Calu3 (cell line): ENCODE measurements at regions of chr3 and their contacts with region 1.

Region 1: GRCh38 chr3:139427283-139427993 is 38.0 kb upstream of the COPB2 start:
- DNase-seq: peak; percentile 73
- H3K4me3 Mint-ChIP-seq: no peak overlapping the region
- H3K27ac Mint-ChIP-seq: no peak overlapping the region
- H3K4me1 Mint-ChIP-seq: no peaks in the 10 kb centered on the region
- H3K27me3 Mint-ChIP-seq: no peaks in the 10 kb centered on the region
- CTCF ChIP-seq: peak; percentile 83

Region 2: DNA sequence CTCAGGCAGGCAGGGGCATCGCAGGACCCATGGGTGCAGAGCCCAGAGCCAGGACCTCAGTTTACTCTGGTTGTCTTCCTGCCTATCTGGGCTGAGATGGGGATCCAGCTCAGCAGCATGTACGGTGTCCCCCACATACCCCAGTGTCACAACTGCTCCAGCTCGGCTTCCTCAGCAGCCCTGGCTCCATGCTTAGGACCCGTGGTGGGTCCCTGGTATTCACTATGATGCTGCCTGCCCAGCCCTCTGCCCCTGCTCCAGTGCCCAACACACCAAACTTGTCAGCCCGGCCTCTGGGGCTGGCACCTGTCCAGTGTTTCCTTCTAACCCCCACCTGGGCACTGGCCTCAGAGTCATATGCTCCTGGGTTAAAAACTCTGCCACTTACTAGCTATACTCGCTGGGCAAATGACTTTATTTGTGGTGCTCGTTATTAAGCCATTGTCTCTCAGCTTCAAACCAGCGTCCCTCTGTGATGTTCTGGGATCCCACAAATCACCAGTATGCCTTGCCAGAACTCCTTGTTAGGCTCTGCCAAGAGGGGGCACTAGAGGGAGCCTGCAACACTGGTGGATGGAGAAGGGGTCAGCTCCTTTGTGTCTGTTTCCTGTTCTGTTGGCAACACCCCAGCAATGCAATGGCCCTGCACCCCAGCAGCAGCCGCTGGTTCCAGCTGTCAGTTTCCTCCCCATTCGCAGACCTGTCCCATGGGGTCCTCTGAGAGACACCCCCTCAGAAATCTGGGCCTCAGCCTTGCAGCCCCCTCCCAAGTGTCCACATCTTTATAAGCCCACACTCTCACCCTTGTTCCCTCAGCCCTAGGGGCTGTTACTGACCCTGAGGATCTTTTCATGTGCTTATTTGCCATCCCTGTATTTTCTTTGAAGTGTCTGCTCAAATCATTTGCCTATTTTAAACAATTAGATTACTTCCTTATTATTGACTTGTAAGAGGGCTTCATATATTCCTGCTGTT is 107.7 kb before region 1 on chr3:
- CTCF ChIA-PET with region 1: no interaction called
- intact Hi-C with region 1: no loop called
- DNase-seq: peak; percentile 65
- H3K4me3 Mint-ChIP-seq: no peak overlapping the region
- H3K27ac Mint-ChIP-seq: no peak overlapping the region
- H3K4me1 Mint-ChIP-seq: peaks cover 39% of the 10 kb centered on the region
- H3K27me3 Mint-ChIP-seq: no peaks in the 10 kb centered on the region
- CTCF ChIP-seq: no peak

Region 3: GRCh38 chr3:139506766-139507165 is 79.3 kb after region 1 on chr3:
- CTCF ChIA-PET with region 1: interaction called, 3 read pairs
- intact Hi-C with region 1: loop called (anchors 5 kb)
- DNase-seq: peak; percentile 31
- H3K4me3 Mint-ChIP-seq: no peak overlapping the region
- H3K27ac Mint-ChIP-seq: no peak overlapping the region
- H3K4me1 Mint-ChIP-seq: peaks cover 32% of the 10 kb centered on the region
- H3K27me3 Mint-ChIP-seq: no peaks in the 10 kb centered on the region
- CTCF ChIP-seq: peak; percentile 32

Region 4: DNA sequence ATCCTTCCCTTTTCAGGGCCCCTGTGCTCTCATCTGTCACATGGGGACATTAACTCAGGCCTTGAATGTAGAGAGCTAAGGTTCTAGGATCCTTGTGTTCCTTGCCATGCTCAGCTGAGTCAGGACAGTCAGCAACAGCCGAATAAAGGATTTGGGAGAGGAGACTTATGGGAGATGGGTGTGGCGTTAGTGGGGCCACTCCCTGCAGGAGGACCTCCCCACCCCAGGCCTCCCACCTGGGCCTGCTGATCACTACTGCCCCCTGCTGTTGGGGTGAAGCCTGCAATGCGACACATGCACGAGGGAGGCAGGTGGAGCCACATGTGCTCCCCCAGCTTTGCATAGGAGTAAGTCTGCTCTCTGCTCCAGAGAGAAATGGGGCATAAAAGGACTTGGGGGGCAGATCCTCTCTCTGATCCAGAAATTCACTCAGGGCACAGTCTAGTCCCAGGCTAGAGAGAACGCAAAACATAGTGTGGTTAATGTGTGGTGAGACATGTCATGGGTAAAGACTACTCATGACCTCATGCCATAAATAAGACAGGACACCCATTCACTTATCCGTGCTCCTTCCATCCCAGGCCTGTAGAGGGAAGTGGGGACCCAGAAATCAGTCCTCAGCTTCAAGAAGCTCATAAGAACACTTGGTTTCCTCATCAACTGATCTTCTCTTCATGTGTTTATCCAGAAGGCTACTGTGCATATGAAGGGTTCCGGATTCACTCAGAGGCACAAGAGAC is 92.7 kb after region 1 on chr3:
- CTCF ChIA-PET with region 1: interaction called, 10 read pairs
- intact Hi-C with region 1: loop called (anchors 1 kb)
- DNase-seq: peak; percentile 88
- H3K4me3 Mint-ChIP-seq: no peak overlapping the region
- H3K27ac Mint-ChIP-seq: no peak overlapping the region
- H3K4me1 Mint-ChIP-seq: peaks cover 7% of the 10 kb centered on the region
- H3K27me3 Mint-ChIP-seq: no peaks in the 10 kb centered on the region
- CTCF ChIP-seq: peak; percentile 81

Region 5: DNA sequence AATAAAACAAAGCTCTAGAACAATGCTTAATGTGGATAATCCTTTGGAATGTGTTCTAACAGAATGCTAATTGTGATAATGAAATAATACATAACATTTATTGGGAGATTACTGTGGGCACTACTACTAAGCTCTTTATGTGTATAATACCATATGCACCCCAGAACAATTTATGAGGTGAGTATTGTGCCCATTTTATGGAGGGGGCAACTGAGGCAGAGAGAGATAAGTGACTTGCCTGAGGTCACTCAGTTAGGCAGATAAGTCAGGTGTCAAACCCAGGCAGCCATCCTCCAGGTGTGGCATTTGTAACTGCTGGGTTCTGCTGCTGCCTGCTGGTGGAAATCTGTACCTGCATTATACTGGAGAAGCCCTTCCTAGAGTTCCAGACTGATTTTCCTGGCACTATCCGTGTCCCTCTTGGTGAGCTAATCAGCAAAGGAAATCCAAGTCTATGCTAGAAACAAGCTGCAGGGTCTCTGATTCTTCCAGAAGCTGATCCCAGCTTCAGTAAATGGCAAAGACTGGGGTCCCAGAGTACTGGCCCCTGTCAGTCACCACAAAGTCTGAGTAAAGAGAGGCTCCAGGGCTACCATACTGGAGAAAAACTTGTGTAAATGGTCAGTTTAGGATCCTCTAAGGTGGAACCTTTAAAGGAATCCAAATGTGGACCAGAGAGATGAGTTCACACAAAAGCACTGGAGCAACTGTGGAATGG is 134.7 kb after region 1 on chr3:
- CTCF ChIA-PET with region 1: interaction called, 16 read pairs
- intact Hi-C with region 1: loop called (anchors 1 kb)
- DNase-seq: peak; percentile 71
- H3K4me3 Mint-ChIP-seq: no peak overlapping the region
- H3K27ac Mint-ChIP-seq: no peak overlapping the region
- H3K4me1 Mint-ChIP-seq: peaks cover 36% of the 10 kb centered on the region
- H3K27me3 Mint-ChIP-seq: no peaks in the 10 kb centered on the region
- CTCF ChIP-seq: peak; percentile 81

Region 6: DNA sequence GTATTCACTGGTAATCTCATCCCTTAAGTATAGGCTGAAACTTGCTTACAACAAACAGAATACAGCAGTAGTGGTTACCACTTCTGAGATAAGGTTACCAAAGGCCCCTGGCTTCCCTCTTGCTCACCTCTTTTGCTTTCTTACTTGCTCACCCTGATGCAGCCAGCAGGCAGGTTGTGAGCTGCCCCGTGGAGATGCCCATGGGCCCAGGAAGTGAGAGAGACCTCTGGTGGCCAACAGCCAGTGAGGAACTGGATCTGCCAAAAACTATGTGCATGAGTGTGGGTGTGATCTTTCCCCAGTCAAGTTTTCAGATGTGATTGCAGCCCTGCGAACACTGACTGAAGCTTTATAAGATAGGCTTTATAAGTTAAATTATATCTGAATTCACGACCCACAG is 201.6 kb after region 1 on chr3:
- CTCF ChIA-PET with region 1: interaction called, 6 read pairs
- intact Hi-C with region 1: loop called (anchors 1 kb)
- DNase-seq: peak; percentile 72
- H3K4me3 Mint-ChIP-seq: no peak overlapping the region
- H3K27ac Mint-ChIP-seq: no peak overlapping the region
- H3K4me1 Mint-ChIP-seq: no peaks in the 10 kb centered on the region
- H3K27me3 Mint-ChIP-seq: no peaks in the 10 kb centered on the region
- CTCF ChIP-seq: peak; percentile 13